GM12878 (cell line): ENCODE measurements at regions of chr15 and their contacts with region 1.

Region 1: DNA sequence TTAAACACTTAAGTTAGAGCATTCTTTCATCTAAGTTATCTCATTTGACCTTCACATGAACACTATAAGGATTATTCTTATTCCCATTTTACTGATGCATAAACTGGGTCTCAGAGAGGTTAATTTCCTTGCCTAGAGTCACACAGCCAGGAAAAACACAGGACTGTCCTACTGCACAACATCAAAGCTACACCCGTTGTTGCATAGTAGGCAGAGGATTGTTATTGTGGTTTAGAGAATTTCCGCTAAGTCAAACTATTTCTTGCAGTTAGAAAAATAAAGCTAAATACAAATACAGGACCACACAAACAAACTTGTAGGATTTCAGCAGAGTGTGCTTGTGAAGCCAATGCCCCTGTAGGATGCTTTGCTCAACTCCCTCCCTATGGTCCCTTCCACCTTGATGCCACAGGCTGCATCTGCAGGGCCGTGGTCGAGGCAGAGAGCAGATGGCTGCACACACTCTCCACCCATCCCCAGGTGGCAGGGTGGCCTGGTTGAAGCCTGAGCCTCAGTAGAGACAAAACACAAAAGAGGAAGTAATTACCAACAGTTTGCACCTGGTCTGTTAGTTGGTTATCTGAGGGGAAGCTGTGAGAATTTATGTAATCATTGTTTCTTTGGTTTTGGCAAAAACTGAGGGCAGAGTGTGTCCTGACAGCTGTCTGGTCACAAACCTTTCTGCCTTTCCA is 41.1 kb upstream of the SKOR1 start:
- DNase-seq: peak; percentile 82
- ATAC-seq: peak; percentile 94
- H3K4me3 ChIP-seq: no peak overlapping the region
- H3K27ac ChIP-seq: peak overlapping the region; percentile 63
- H3K4me1 ChIP-seq: peaks cover 33% of the 10 kb centered on the region
- H3K27me3 ChIP-seq: no peaks in the 10 kb centered on the region
- CTCF ChIP-seq: 0 out of 6 replicates have a peak, but pooled peaks of 1 of the 3 experiments have one; percentile 9
- EP300 ChIP-seq: peak; percentile 73 to 88
- POLR2A ChIP-seq: no peak
- RAD21 ChIP-seq: no peak

Region 2: DNA sequence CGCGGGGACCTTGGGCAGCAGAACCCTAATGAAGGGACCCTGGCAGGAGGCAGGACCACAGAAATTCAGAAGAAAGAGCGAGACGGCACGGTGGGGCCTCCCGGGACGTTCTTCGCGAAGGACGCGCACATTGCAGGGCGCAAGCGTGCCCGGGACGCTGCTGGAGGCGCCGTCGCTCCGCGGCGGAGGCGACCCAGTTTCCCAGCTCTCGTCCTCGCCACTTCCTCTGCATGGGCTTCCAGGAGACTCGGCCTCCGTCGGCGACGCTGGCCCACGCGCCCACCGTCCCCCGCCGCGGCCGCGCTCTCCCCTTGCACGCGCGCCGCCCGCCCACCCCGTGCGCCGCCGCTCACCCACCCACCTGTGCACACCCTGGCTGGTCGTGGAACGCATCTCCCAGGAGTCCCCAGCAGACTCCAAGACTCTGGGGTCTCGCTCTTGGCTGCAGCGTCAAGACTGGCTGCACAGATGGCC is 750.6 kb before region 1 on chr15:
- CTCF ChIA-PET with region 1: no interaction called
- POLR2A ChIA-PET with region 1: no interaction called
- RAD21 ChIA-PET with region 1: no interaction called
- SMC1A ChIA-PET with region 1: no interaction called
- in situ Hi-C with region 1: no loop called
- intact Hi-C with region 1: no loop called
- DNase-seq: no peak
- ATAC-seq: no peak
- H3K4me3 ChIP-seq: no peak overlapping the region
- H3K27ac ChIP-seq: no peak overlapping the region
- H3K4me1 ChIP-seq: no peaks in the 10 kb centered on the region
- H3K27me3 ChIP-seq: no peaks in the 10 kb centered on the region
- CTCF ChIP-seq: no peak
- EP300 ChIP-seq: no peak
- POLR2A ChIP-seq: no peak
- RAD21 ChIP-seq: no peak

Region 3: DNA sequence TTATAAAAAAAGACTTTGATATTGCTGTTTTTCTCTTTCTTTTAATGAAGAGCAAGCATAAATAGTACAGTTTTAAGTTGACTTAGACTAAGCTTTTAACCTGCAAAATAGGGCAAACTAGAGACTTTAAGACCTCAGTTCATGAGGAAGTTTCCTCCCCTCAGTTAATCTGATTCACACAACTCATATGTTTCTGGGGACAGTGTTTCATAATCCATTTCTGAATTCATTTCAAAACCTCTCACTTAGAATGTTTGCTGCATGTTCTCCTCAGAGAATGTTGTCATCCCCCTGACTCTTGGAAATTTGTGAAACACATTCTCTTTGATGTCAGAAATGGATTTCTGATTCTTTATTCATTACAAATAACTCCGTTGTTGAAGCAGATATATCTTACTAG is 38.2 kb before region 1 on chr15:
- CTCF ChIA-PET with region 1: interaction called, 4 read pairs
- POLR2A ChIA-PET with region 1: interaction called, 4 read pairs
- RAD21 ChIA-PET with region 1: interaction called, 7 read pairs
- SMC1A ChIA-PET with region 1: interaction called, 11 read pairs
- in situ Hi-C with region 1: no loop called
- intact Hi-C with region 1: no loop called
- DNase-seq: no peak
- ATAC-seq: no peak
- H3K4me3 ChIP-seq: no peak overlapping the region
- H3K27ac ChIP-seq: no peak overlapping the region
- H3K4me1 ChIP-seq: peaks cover 7% of the 10 kb centered on the region
- H3K27me3 ChIP-seq: no peaks in the 10 kb centered on the region
- CTCF ChIP-seq: no peak
- EP300 ChIP-seq: no peak
- POLR2A ChIP-seq: no peak
- RAD21 ChIP-seq: no peak

Region 4: DNA sequence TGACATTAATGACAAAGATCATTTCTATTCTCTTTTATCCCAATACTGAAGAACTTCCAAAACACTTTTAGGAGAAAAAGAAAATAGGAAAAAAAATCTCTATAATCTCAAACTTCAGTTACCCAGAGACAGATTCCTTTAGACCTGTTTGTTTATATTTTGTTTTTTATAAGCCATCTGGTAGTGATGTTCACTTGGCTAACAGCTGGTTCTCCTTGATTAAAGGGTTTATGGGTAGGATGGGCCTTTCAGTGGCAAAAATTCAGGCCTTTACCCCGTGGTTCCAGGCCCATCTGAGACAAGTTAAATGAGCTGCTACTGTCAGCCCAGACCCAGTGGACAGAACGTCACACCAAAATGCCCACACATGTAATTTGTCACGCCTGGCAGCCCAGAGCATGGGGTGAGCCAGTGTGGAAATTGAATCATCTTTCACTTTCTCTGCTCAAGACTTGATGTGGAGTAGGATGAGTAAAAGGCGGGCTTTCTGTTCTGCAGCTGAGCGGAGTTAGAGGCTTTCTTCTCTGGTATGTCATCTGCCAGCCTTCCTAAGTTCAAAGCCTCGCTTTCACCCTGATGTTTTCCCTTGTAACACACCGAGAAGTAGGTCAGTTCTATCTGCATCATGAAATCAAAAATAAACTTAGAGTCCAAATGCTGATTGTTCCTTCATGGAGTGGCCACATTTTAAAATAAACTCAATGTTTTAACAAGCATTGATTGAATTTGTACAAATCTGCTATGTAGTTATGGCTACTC is 21.4 kb before region 1 on chr15:
- CTCF ChIA-PET with region 1: interaction called, 18 read pairs
- POLR2A ChIA-PET with region 1: no interaction called
- RAD21 ChIA-PET with region 1: interaction called, 6 read pairs
- SMC1A ChIA-PET with region 1: interaction called, 37 read pairs
- in situ Hi-C with region 1: no loop called
- intact Hi-C with region 1: no loop called
- DNase-seq: peak; percentile 85
- ATAC-seq: peak; percentile 98
- H3K4me3 ChIP-seq: no peak overlapping the region
- H3K27ac ChIP-seq: peak overlapping the region; percentile 54
- H3K4me1 ChIP-seq: peaks cover 29% of the 10 kb centered on the region
- H3K27me3 ChIP-seq: no peaks in the 10 kb centered on the region
- CTCF ChIP-seq: no peak
- EP300 ChIP-seq: peak; percentile 49 to 67; a peak in 2 of 4 replicates
- POLR2A ChIP-seq: no peak
- RAD21 ChIP-seq: no peak

Region 5: GRCh38 chr15:67771189-67771800 is 12.9 kb before region 1 on chr15:
- CTCF ChIA-PET with region 1: interaction called, 6 read pairs
- POLR2A ChIA-PET with region 1: no interaction called
- RAD21 ChIA-PET with region 1: interaction called, 3 read pairs
- SMC1A ChIA-PET with region 1: interaction called, 37 read pairs
- in situ Hi-C with region 1: no loop called
- intact Hi-C with region 1: no loop called
- DNase-seq: no peak
- ATAC-seq: no peak
- H3K4me3 ChIP-seq: no peak overlapping the region
- H3K27ac ChIP-seq: no peak overlapping the region
- H3K4me1 ChIP-seq: no peaks in the 10 kb centered on the region
- H3K27me3 ChIP-seq: no peaks in the 10 kb centered on the region
- CTCF ChIP-seq: no peak
- EP300 ChIP-seq: no peak
- POLR2A ChIP-seq: no peak
- RAD21 ChIP-seq: no peak

Region 6: DNA sequence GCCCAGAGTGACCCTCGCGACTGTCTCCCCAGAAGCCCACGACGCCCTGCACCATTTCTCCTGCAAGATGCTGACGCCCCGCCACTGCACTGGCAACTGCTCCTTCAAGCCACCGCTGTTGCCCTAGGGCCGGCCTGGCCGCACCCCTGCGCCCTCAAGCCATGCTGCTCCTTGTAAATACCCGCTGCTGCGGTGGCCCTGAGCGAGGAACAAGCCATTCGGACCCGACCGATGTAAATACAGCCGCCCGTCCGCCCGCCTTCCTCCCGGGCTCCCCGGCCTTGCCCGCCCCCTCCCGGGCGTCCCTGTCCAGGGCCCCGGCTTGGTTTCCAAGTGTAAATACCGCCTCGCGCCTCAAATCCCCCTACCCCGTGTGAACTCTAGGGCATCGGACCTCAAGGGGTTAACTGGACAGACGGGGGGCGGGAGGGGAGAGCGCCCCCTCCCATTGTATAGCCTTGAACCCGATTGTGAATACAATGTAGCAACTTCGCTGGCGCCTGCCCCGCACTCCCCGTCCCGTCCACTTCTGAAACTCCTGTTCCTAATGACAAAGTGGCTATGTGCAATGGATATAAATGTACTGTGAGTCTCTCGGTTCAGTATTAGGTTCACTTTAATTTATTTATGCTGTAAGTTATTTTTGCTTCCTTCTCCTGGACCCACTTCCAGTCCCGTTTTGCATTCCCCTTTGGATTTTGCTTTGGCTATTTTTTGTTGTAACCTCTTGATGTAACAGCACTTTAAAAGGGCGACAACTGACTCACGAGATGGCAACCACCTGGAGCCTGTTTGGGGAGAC is 49.7 kb after region 1 on chr15:
- CTCF ChIA-PET with region 1: interaction called, 52 read pairs
- POLR2A ChIA-PET with region 1: no interaction called
- RAD21 ChIA-PET with region 1: interaction called, 22 read pairs
- SMC1A ChIA-PET with region 1: interaction called, 50 read pairs
- in situ Hi-C with region 1: no loop called
- intact Hi-C with region 1: loop called (anchors 1 kb)
- DNase-seq: no peak
- ATAC-seq: peak; percentile 71
- H3K4me3 ChIP-seq: peak overlapping the region; percentile 34; the same call in 1 of the 2 replicates
- H3K27ac ChIP-seq: no peak overlapping the region
- H3K4me1 ChIP-seq: peaks cover 19% of the 10 kb centered on the region
- H3K27me3 ChIP-seq: peaks cover 21 to 35% of the 10 kb centered on the region in 2 experiments
- CTCF ChIP-seq: peak; percentile 51 to 76 (median 76)
- EP300 ChIP-seq: no peak
- POLR2A ChIP-seq: no peak
- RAD21 ChIP-seq: peak; percentile 76